Endothelial cell of umbilical vein (primary cell): ENCODE measurements at regions of chr5 and their contacts with region 1.

Region 1: DNA sequence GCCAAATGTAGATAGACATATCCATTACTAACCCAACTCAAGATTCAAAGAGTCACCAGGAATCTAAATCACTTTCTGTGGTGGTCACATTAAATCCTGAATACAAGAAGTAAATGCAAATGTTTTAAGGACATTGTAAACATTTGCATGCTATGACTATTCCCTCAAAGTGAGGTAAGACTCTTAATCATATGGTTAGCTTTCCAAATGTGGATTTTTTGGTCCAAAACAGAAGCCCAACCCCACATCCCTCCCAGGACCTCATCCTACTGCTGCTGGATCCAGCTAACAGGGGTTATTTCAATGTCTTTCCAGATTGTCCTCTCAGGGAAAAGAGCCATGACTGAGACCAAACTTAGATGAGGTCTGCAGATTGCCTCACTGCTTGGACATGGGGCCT is 228.1 kb upstream of the PANK3 start:
- DNase-seq: no peak
- H3K4me3 ChIP-seq: no peak overlapping the region
- H3K27ac ChIP-seq: no peak overlapping the region
- H3K4me1 ChIP-seq: no peaks in the 10 kb centered on the region
- H3K27me3 ChIP-seq: no peaks in the 10 kb centered on the region
- CTCF ChIP-seq: no peak
- POLR2A ChIP-seq: no peak

Region 2: DNA sequence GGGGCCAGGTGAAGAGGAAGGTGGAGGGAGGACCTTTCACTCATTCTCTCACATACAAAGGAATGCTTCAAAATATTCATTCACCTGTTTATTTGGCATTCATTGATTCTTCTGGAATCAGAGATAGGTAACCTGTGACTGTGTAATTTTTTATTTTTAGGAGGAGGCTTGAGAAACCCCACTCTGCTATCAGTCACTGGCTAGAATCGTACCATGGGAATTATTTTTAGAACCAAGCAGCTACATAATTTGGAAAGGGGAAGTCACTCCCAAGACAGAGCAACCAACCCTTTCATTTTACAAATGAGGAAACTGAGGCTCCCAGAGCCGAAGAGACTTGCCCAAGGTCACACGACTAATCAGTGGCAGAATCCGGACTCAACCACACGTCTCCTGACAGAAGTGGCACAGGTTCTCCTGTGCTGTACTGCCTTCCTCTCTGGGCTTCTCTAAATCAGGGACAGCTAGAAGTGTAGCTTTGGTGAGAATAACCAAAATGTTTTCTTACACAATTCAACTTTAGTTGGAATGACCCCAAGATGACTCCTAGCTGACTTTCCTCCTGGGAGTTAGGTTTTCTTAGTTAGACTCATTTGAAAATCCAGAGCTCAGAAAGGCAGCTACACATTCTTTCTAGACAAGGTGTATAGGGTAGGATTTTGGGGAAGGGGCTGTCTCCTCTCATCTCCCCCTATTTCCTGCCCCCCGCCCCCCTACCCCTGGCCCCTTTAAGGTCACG is 36.2 kb after region 1 on chr5:
- CTCF ChIA-PET with region 1: no interaction called
- POLR2A ChIA-PET with region 1: no interaction called
- dilution Hi-C with region 1: no loop called
- intact Hi-C with region 1: loop called (anchors 1 kb)
- DNase-seq: no peak
- H3K4me3 ChIP-seq: no peak overlapping the region
- H3K27ac ChIP-seq: no peak overlapping the region
- H3K4me1 ChIP-seq: no peaks in the 10 kb centered on the region
- H3K27me3 ChIP-seq: no peaks in the 10 kb centered on the region
- CTCF ChIP-seq: no peak
- POLR2A ChIP-seq: no peak

Region 3: GRCh38 chr5:168865968-168866367 is 58.7 kb after region 1 on chr5:
- CTCF ChIA-PET with region 1: no interaction called
- POLR2A ChIA-PET with region 1: no interaction called
- dilution Hi-C with region 1: no loop called
- intact Hi-C with region 1: no loop called
- DNase-seq: no peak
- H3K4me3 ChIP-seq: no peak overlapping the region
- H3K27ac ChIP-seq: no peak overlapping the region
- H3K4me1 ChIP-seq: no peaks in the 10 kb centered on the region
- H3K27me3 ChIP-seq: no peaks in the 10 kb centered on the region
- CTCF ChIP-seq: no peak
- POLR2A ChIP-seq: no peak